Ovary (tissue), 10 donors: ENCODE measurements at regions of chr10 and their contacts with region 1.

Region 1: DNA sequence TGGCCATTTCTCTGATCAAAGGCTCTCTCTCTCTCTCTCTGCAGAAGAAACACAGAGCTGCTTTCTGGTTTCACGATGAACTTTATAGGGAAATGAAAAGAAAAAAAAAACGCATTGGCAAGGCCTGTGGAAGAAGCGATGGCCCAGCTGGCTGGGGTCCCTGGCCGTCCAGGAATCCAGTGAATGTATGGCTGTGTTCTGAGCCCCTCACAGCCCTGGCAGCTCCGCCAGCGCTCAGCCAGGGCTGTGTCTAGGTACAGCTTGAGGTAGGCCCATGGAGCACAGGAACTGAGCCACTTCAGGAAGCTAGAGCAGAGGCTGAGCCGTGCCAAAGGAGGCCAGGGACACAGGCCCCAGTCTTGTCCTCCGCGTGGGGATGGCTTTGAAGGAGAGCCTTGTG is 13.1 kb upstream of the UCMA start:
- DNase-seq: no peak
- H3K4me3 ChIP-seq: no peak overlapping the region
- H3K27ac ChIP-seq: no peak overlapping the region
- H3K4me1 ChIP-seq: no peaks in the 10 kb centered on the region
- H3K27me3 ChIP-seq: no peaks in the 10 kb centered on the region
- CTCF ChIP-seq: no peak
- EP300 ChIP-seq: no peak
- POLR2A ChIP-seq: no peak

Region 2: GRCh38 chr10:13087986-13088618 is 159.1 kb before region 1 on chr10:
- intact Hi-C with region 1: no loop called
- DNase-seq: no peak
- H3K4me3 ChIP-seq: no peak overlapping the region
- H3K27ac ChIP-seq: no peak overlapping the region
- H3K4me1 ChIP-seq: peaks cover 4% of the 10 kb centered on the region
- H3K27me3 ChIP-seq: no peaks in the 10 kb centered on the region
- CTCF ChIP-seq: no peak
- EP300 ChIP-seq: no peak
- POLR2A ChIP-seq: no peak

Region 3: DNA sequence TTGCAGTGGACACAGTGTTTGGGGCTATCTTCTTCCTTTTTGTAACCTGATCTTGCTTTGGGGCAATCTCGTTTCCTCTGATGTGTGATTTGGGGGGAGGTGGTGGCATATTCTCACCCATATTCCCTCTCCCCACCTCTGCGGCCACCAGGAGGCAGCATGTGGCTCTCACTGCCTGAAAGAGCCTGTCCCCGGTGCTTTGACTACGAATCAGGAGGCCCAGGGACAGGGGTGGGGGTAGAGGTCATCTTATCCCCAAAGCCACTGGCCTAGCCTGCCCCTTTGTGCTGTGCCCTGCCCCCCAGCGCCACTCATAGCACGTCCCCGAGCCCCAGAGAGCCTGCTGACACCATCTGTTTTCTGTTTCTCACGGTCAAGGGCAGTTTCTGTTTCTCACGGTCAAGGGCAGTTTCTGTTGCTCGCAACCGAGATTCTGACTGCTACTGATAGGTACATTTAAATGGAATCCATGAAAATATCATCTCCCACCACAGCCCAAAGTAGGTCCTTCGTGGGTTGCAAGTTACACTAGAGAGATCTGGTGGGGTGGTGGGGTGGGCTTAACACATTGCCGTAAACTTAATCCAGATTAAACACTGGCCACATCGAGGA is 24.4 kb after region 1 on chr10:
- intact Hi-C with region 1: loop called in 1 of 4 experiments (anchors 1 kb)
- DNase-seq: peak; percentile 35 to 62 (median 49)
- H3K4me3 ChIP-seq: no peak overlapping the region
- H3K27ac ChIP-seq: peak overlapping the region in 1 of 2 donors; percentile 65
- H3K4me1 ChIP-seq: peaks cover 15% of the 10 kb centered on the region
- H3K27me3 ChIP-seq: no peaks in the 10 kb centered on the region
- CTCF ChIP-seq: peak in 2 of 3 donors; percentile 5 to 24
- EP300 ChIP-seq: no peak
- POLR2A ChIP-seq: no peak